AG04450 (cell line): ENCODE measurements at regions of chr21 and their contacts with region 1.

Region 1: DNA sequence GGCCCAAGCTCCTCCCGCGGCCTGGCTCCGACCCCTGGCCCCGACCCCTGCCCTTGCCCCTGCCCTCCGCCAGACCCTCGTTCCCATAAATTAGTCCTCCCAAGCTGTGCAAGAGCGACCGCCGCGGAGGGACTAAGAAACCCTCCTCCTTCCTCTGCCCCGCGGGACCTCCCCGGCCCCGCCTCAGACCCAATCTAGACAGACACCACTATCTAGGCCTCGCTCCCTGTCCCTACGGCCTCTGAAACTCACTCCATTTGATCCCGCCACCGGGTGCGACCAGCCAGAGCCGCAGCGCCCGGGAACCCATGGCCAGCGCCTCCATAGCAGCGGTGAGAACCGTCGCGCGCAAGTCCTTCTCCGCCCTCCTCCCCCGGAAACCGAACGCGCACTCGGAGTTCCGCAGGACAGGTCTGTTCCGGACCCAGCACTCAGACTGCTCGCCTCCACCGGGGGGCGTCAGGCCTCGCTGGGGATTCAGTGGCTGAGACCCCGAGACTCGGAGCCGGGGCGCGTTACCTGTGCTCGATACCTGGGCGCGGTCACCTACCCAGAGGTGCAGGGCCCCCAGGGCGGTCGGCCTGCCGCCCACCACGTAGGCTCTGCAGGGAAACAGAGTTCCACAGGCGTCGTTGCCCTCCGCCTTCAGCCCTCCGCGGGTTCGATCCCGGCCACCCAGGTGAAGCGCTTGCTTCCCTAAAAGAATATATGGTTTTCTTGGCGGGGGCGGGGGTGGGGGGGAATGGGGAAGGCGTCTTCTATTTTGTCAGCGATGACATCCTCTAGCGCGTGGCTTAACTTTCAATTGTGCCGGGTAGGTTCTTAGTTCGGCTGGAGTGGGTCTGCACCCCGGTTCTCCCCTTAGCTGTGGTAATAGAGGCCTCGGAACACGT is at the start of gene MRPL39:
- DNase-seq: peak; percentile 77
- H3K4me3 ChIP-seq: peak within 1 kb of the TSS; percentile 83
- H3K27ac ChIP-seq: peak within 1 kb of the TSS; percentile 75
- H3K27me3 ChIP-seq: no peaks in the 10 kb centered on the region
- CTCF ChIP-seq: peak; percentile 77
- polyA plus RNA-seq, gene MRPL39: 22.8 and 37.0 TPM in 2 replicates

Region 2: DNA sequence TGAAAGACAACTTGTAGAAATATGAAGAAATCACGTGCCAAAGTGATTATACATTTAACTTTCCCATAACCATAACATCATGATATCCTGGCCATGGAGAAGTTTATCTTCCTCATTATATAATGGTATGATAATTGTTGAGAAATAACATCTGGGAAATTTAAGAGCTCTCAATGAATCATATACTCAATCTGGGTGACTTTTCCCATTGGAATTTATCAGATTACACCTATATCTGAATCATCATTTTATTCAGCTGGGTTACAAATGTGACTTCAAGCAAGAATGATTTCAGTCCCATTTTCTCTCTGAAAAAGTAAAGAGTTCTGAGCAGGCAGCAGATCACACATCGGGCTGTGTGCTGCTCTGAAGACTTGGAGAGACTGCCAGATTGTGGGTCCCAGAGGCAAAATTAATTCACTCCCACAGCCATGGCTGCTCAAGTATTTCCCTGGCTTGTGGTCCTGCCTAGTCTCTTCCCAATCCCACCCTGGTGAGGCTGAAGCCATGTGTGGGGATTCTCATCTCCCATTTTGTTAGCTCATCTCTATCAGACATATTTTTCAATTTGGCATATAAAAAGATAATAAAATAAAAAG is 278.1 kb before region 1 on chr21:
- CTCF ChIA-PET with region 1: no interaction called
- POLR2A ChIA-PET with region 1: no interaction called
- DNase-seq: peak; percentile 59
- H3K4me3 ChIP-seq: no peak overlapping the region
- H3K27ac ChIP-seq: peak overlapping the region; percentile 82
- H3K27me3 ChIP-seq: no peaks in the 10 kb centered on the region
- CTCF ChIP-seq: no peak

Region 3: GRCh38 chr21:25626757-25627156 is 19.4 kb after region 1 on chr21:
- CTCF ChIA-PET with region 1: interaction called, 21 read pairs
- POLR2A ChIA-PET with region 1: no interaction called
- DNase-seq: no peak
- H3K4me3 ChIP-seq: no peak overlapping the region
- H3K27ac ChIP-seq: no peak overlapping the region
- H3K27me3 ChIP-seq: peaks cover 3% of the 10 kb centered on the region
- CTCF ChIP-seq: no peak

Region 4: GRCh38 chr21:25708467-25709065 is 101.2 kb after region 1 on chr21:
- CTCF ChIA-PET with region 1: interaction called, 97 read pairs
- POLR2A ChIA-PET with region 1: no interaction called
- DNase-seq: peak; percentile 23
- H3K4me3 ChIP-seq: no peak overlapping the region
- H3K27ac ChIP-seq: no peak overlapping the region
- H3K27me3 ChIP-seq: no peaks in the 10 kb centered on the region
- CTCF ChIP-seq: peak; percentile 80

Region 5: DNA sequence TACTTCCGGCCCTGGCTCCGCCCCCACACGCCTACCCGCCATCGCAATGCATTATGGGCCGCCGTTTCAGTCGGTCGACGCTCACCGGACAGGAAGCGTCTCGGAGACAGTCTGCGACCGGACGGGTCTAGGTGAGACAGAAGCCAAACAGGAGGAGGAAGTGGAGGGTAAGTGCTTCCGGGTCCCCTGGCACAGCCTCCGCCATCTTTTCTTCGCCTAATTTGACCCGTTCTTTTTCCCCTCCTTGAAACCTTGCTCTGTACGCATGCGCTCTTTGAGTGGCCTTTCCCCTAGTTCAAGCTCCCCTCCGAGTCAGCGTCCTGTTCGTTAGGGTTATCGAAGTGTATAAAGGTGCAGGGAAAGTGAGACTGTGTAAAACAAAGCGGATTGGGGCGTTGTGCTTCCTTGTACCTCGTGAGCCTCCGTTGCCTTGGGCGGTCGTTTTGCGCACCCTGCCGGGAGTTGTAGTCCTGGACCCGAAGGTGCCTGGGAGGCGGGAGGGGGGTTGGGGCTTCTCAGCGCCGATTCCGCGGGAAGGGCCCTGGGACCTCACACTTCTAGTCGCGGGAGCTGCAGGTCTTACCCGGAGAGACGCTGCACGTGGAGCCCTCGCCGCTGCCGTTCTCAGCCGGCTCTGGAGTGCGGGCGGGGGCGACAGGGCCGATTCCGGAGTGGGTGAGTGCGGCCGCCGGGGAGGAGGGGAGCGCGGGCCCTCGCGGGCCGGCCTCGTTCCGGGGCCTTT is 127.7 kb after region 1 on chr21 and contains the starts of genes ATP5PF and GABPA:
- CTCF ChIA-PET with region 1: interaction called, 15 read pairs
- POLR2A ChIA-PET with region 1: no interaction called
- DNase-seq: peak; percentile 97
- H3K4me3 ChIP-seq: peak within 1 kb of the TSS; percentile 98
- H3K27ac ChIP-seq: peak within 1 kb of the TSS; percentile 100
- H3K27me3 ChIP-seq: no peaks in the 10 kb centered on the region
- CTCF ChIP-seq: peak; percentile 36
- polyA plus RNA-seq, gene ATP5PF: 142 and 222 TPM in 2 replicates
- polyA plus RNA-seq, gene GABPA: 17.5 and 26.6 TPM in 2 replicates

Region 6: DNA sequence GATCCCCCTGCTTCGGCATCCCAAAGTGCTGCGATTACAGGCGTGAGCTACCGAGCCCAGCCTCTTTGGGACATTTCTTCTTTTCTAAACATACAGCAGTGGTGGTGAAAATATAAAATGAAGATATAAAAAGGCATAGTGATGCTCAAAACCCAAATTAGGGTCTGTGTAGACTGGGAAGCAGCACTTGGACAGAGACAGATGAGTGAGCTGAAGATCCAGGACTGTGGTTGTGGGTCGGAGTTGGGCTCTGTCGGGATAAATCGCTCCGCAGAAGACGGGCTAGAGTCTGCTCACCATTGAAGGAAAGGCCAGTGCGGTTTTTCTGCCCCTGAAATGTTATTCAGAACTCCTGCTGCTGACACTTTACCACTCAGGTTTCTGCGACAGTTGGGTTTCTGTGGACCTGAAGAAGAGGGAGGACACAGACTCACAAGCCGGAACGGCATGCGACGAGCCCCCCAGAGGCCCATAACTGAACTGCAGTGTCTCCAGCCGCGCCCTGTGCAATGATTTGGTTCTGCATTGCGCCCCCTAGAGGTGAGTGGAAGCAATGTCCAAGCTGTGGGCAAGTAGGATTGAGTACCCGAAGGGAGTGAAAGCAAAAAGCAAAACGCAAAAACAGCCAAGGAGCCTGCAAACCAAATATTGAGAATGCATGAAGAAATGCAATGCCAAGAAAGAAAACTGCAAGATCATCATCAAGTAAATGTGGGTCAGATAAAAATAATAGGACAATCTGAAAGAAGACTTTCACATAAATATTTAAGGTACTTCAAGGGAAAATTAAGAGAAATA is 194.0 kb after region 1 on chr21:
- CTCF ChIA-PET with region 1: interaction called, 17 read pairs
- POLR2A ChIA-PET with region 1: no interaction called
- DNase-seq: peak; percentile 57
- H3K4me3 ChIP-seq: no peak overlapping the region; the same call in 1 of the 2 replicates
- H3K27ac ChIP-seq: no peak overlapping the region
- H3K27me3 ChIP-seq: no peaks in the 10 kb centered on the region
- CTCF ChIP-seq: peak; percentile 97

Region 7: DNA sequence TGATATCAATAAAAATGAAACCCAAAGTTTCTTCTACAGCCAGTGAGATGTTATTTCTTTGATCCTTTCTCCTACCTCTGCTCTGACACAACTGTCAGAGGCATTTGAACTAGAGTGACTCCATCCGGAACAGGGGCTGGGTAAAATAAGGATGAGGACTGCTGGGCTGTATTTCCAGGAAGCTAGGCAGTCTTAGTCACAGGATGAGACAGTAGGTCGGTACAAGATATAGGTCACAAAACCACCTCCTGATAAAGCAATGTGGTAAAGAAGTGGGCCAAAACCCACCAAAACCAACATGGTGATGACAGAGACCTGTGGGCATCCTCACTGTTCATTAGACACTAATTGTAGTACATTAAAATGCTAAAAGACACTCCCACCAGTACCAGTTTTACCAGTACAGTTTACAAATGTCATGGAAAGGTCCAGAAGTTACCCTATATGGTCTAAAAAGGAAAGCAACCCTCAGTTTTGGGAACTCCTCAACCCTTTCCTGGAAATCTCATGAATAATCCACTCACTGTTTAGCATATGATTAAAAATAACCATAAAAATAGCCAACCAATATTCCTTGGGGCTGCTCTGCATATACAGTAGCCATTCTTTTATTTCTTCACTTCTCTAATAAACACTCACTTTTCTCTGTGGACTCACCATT is 224.0 kb after region 1 on chr21:
- CTCF ChIA-PET with region 1: no interaction called
- POLR2A ChIA-PET with region 1: no interaction called
- DNase-seq: no peak
- H3K4me3 ChIP-seq: no peak overlapping the region
- H3K27ac ChIP-seq: no peak overlapping the region
- H3K27me3 ChIP-seq: no peaks in the 10 kb centered on the region
- CTCF ChIP-seq: no peak